Motor neuron (in vitro differentiated cells): ENCODE measurements at regions of chr3 and their contacts with region 1.

Region 1: GRCh38 chr3:47781685-47782445 is at the start of gene SMARCC1:
- ATAC-seq: peak; percentile 87 to 95 (median 91)
- H3K4me3 ChIP-seq: peak within 1 kb of the TSS; percentile 70 to 95 (median 88)
- H3K27ac ChIP-seq: peak within 1 kb of the TSS; percentile 98 to 99
- H3K4me1 ChIP-seq: peaks cover 4 to 10% of the 10 kb centered on the region in 2 donors
- total RNA-seq, gene SMARCC1: 35.9 to 114 (median 55.4) TPM

Region 2: GRCh38 chr3:47282424-47283192 is 499.3 kb before region 1 on chr3 and contains the starts of genes KIF9 and KLHL18:
- in situ Hi-C with region 1: no loop called
- ATAC-seq: peak; percentile 81 to 94 (median 92)
- H3K4me3 ChIP-seq: peak within 1 kb of the TSS; percentile 51 to 89 (median 59)
- H3K27ac ChIP-seq: peak within 1 kb of the TSS; percentile 94 to 98
- H3K4me1 ChIP-seq: peaks cover 5 to 7% of the 10 kb centered on the region in 2 donors
- total RNA-seq, gene KIF9: 3.5 to 58.5 (median 9.5) TPM
- total RNA-seq, gene KLHL18: 13.9 to 30.7 (median 18.1) TPM

Region 3: DNA sequence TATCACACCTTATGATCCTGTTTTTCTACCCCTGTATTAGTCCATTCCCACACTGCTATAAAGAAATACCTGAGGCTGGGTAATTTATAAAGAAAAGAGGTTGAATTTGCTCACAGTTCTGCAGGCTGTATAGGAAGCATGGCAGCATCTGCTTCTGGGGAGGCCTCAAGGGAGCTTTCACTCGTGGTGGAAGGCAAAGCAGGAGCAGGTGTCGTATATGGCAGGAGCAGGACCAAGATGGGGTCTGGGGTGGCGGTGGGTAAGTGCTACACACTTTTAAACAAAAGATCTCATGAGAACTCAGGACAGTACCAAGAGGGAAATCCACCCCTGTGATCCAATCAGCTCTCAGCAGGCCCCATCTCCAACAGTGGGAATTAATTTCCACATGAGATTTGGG is 290.7 kb before region 1 on chr3:
- in situ Hi-C with region 1: no loop called
- ATAC-seq: no peak
- H3K4me3 ChIP-seq: no peak overlapping the region
- H3K27ac ChIP-seq: peak overlapping the region in 1 of 2 donors; percentile 37
- H3K4me1 ChIP-seq: no peaks in the 10 kb centered on the region

Region 4: DNA sequence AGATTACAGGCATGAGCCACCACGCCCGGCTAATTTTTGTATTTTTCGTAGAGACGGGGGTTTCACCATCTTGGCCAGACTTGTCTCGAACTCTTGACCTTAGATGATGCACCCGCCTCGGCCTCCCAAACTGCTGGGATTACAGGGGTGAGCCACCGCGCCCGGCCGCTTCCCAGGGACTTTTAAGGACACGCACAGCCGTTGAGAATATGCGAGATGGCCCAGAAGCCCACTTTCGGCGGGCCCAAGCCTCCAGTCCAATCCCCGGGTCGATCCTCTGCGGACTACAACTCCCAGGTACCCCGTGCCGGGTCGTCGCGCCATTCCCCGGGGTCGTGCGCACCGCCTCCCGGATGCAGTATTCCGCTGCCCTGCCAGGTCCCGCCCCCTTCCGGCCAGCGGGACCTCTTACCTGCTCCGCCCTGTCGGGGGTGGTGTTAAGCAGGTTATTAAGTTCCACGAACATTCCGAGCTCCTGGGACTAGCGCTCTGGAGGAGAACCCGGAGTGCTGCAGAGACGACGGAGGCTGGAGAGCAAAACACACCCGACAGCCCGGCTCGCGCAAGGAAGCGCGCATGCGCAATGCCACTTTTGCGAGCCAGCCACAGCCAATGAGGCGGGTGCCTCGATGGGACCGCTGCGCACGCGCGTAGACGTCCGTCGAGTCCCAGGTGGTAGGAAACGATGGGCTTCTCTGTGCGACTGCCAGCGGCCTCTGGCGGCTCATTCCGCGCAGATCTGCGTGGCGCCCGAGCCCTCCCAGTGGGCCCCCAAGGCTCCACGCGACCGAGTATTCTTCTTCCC is 268.5 kb before region 1 on chr3 and contains the start of gene ELP6:
- in situ Hi-C with region 1: loop called in 3 of 9 experiments (anchors 25 kb)
- ATAC-seq: peak; percentile 94 to 98 (median 94)
- H3K4me3 ChIP-seq: peak within 1 kb of the TSS; percentile 48 to 67 (median 49)
- H3K27ac ChIP-seq: peak within 1 kb of the TSS; percentile 98
- H3K4me1 ChIP-seq: peaks cover 9 to 10% of the 10 kb centered on the region in 2 donors
- total RNA-seq, gene ELP6: 23.6 to 50.6 (median 37.8) TPM

Region 5: GRCh38 chr3:47522082-47522987 is 259.5 kb before region 1 on chr3:
- in situ Hi-C with region 1: loop called in 6 of 9 experiments (anchors 10 to 25 kb)
- ATAC-seq: peak; percentile 94 to 99 (median 98)
- H3K4me3 ChIP-seq: no peak overlapping the region
- H3K27ac ChIP-seq: no peak overlapping the region
- H3K4me1 ChIP-seq: peaks cover 4 to 10% of the 10 kb centered on the region in 2 donors

Region 6: DNA sequence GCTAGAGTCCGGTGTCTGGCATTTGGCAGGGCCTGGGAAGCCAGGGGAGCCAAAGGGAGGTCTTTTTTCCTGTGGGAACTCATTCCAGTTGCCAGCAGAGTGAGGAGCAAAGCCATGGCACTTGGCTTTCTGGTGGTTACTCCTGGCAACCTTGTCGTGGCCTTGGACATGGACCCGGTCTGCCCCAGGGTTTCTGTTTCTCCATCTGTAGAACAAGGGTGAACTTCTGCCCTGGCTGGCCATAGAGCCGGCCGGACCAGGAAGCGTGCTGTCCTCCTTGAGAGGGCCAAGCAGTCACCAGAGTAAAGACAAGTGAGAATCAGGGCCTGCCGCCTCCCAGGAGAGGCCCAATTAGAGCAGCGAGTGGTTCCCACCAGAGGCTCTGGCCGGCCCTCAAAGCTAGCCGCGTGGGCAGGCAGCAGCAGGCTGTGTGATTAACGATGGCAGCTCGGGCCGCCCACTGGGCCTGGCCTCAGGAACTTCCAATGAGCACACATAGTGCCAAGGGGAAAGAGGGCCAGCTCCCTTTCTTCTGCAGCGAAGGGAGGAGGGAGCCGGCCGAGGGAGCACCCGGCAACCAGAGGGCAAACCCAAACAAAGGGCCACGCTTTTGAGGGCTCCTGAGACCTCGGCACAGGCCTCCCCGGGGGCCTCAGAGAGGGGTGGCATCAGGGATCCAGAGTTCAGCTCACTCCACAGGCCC is 239.2 kb before region 1 on chr3:
- in situ Hi-C with region 1: loop called in 1 of 9 experiments (anchors 25 kb)
- ATAC-seq: peak; percentile 82 to 99 (median 98)
- H3K4me3 ChIP-seq: no peak overlapping the region
- H3K27ac ChIP-seq: peak overlapping the region in 1 of 2 donors; percentile 19
- H3K4me1 ChIP-seq: peaks cover 11 to 14% of the 10 kb centered on the region in 2 donors